Activated CD4-positive, alpha-beta T cell treated with anti-CD3 and anti-CD28 coated beads for 36 hours (primary cell): ENCODE measurements at regions of chr7 and their contacts with region 1.

Region 1: GRCh38 chr7:105808703-105809590 is 67.5 kb downstream of the ATXN7L1 start:
- DNase-seq: peak; percentile 94
- ATAC-seq: peak; percentile 82
- H3K4me3 Mint-ChIP-seq: peak overlapping the region; percentile 16
- H3K27ac Mint-ChIP-seq: peak overlapping the region; percentile 71
- H3K4me1 Mint-ChIP-seq: peaks cover 59% of the 10 kb centered on the region
- H3K27me3 Mint-ChIP-seq: peaks cover 8% of the 10 kb centered on the region

Region 2: GRCh38 chr7:105531792-105532671 is 276.9 kb before region 1 on chr7 and contains the start of gene RINT1:
- CTCF ChIA-PET with region 1: no interaction called
- POLR2A ChIA-PET with region 1: no interaction called
- intact Hi-C with region 1: loop called in 1 of 2 experiments (anchors 5 kb)
- DNase-seq: peak; percentile 94
- ATAC-seq: peak; percentile 94
- H3K4me3 Mint-ChIP-seq: peak within 1 kb of the TSS; percentile 91
- H3K27ac Mint-ChIP-seq: peak within 1 kb of the TSS; percentile 91
- H3K4me1 Mint-ChIP-seq: peaks cover 23% of the 10 kb centered on the region
- H3K27me3 Mint-ChIP-seq: no peaks in the 10 kb centered on the region
- total RNA-seq, gene RINT1: 21.2 to 26.2 TPM

Region 3: GRCh38 chr7:105782391-105783042 is 26.4 kb before region 1 on chr7:
- CTCF ChIA-PET with region 1: no interaction called
- POLR2A ChIA-PET with region 1: no interaction called
- intact Hi-C with region 1: loop called (anchors 2 kb)
- DNase-seq: peak; percentile 73
- ATAC-seq: peak; percentile 96
- H3K4me3 Mint-ChIP-seq: no peak overlapping the region
- H3K27ac Mint-ChIP-seq: no peak overlapping the region
- H3K4me1 Mint-ChIP-seq: peaks cover 12% of the 10 kb centered on the region
- H3K27me3 Mint-ChIP-seq: no peaks in the 10 kb centered on the region

Region 4: DNA sequence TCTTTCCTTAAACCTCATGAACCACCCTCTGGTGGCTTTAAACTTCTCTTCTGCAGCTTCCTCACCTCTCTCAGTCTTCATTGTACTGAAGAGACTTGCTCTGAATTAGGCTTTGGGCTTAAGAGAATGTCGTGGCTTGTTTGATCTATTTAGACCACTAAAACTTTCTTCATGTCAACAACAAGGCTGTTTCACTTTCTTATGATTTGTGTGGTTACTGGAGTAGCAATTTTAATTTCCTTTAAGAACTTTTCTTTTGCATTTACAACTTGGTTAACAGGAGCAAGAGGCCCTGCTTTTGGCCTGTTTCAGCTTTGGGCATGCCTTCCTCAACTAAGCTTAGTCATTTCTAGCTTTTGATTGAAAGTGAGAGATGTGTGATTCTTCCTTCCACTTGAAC is 116.0 kb after region 1 on chr7:
- CTCF ChIA-PET with region 1: interaction called, 7 read pairs
- POLR2A ChIA-PET with region 1: no interaction called
- intact Hi-C with region 1: loop called (anchors 1 kb)
- DNase-seq: peak; percentile 59
- ATAC-seq: peak; percentile 91
- H3K4me3 Mint-ChIP-seq: no peak overlapping the region
- H3K27ac Mint-ChIP-seq: peak overlapping the region; percentile 80
- H3K4me1 Mint-ChIP-seq: peaks cover 24% of the 10 kb centered on the region
- H3K27me3 Mint-ChIP-seq: peaks cover 3% of the 10 kb centered on the region

Region 5: GRCh38 chr7:106112117-106112971 is 303.4 kb after region 1 on chr7 and contains the start of gene SYPL1:
- CTCF ChIA-PET with region 1: no interaction called
- POLR2A ChIA-PET with region 1: no interaction called
- intact Hi-C with region 1: loop called in 1 of 2 experiments (anchors 1 kb)
- DNase-seq: peak; percentile 95
- ATAC-seq: peak; percentile 86
- H3K4me3 Mint-ChIP-seq: peak within 1 kb of the TSS; percentile 79
- H3K27ac Mint-ChIP-seq: peak within 1 kb of the TSS; percentile 89
- H3K4me1 Mint-ChIP-seq: peaks cover 64% of the 10 kb centered on the region
- H3K27me3 Mint-ChIP-seq: no peaks in the 10 kb centered on the region
- total RNA-seq, gene SYPL1: 23.7 to 28.8 TPM

Region 6: DNA sequence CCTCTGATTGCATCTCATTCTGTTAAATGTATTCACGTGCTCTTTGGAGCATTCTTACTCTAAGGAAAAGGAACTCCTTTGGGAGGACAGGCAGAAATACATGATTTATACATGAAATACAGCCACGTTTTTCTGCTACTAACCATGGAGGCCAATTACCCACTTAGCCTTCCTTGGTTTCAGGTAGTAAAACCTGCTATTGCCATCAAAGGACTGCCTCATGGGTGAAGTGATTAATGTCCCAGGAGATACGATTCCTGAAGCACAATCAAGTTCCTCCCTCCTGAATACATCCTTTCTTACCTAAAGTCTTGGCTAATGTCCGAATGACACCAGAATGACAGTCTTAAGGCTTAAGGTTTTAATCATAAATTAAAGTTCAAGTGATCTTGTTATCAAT is 997.6 kb after region 1 on chr7:
- CTCF ChIA-PET with region 1: no interaction called
- POLR2A ChIA-PET with region 1: no interaction called
- intact Hi-C with region 1: no loop called
- DNase-seq: no peak
- ATAC-seq: no peak
- H3K4me3 Mint-ChIP-seq: no peak overlapping the region
- H3K27ac Mint-ChIP-seq: no peak overlapping the region
- H3K4me1 Mint-ChIP-seq: no peaks in the 10 kb centered on the region
- H3K27me3 Mint-ChIP-seq: peaks cover 13% of the 10 kb centered on the region

Region 7: DNA sequence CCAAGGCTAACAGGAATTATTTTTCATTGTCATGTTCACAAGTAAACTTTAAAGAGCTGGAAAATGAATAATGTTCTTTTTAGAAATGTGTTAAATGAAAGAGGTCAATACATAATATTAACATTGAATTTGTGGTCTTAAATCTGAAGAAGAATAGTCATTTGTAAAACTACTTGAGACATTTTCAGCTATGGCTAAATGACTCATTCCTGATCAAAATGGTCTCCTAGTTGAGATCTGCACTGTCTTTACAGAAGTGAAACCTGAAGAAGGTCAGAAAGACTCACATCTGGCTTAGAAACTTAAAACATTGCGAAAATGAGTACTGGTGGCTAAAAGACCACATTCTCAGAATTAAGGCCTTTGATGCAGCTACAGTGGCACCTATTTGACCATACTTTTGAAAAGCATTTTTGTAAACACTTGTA is 1062.0 kb after region 1 on chr7:
- CTCF ChIA-PET with region 1: no interaction called
- POLR2A ChIA-PET with region 1: no interaction called
- intact Hi-C with region 1: loop called (anchors 1 to 5 kb)
- DNase-seq: no peak
- ATAC-seq: peak; percentile 82
- H3K4me3 Mint-ChIP-seq: no peak overlapping the region
- H3K27ac Mint-ChIP-seq: no peak overlapping the region
- H3K4me1 Mint-ChIP-seq: peaks cover 72% of the 10 kb centered on the region
- H3K27me3 Mint-ChIP-seq: no peaks in the 10 kb centered on the region

Region 8: GRCh38 chr7:106964466-106964865 is 1155.5 kb after region 1 on chr7:
- CTCF ChIA-PET with region 1: no interaction called
- POLR2A ChIA-PET with region 1: no interaction called
- intact Hi-C with region 1: no loop called
- DNase-seq: no peak
- ATAC-seq: no peak
- H3K4me3 Mint-ChIP-seq: no peak overlapping the region
- H3K27ac Mint-ChIP-seq: no peak overlapping the region
- H3K4me1 Mint-ChIP-seq: no peaks in the 10 kb centered on the region
- H3K27me3 Mint-ChIP-seq: no peaks in the 10 kb centered on the region